IMR-90 (cell line): ENCODE measurements at regions of chr22 and their contacts with region 1.

Region 1: GRCh38 chr22:42969421-42969871 is 45.5 kb downstream of the PACSIN2 start:
- DNase-seq: peak; percentile 86
- ATAC-seq: peak; percentile 30; the same call in 1 of the 2 replicates
- H3K4me3 ChIP-seq: no peak overlapping the region
- H3K27ac ChIP-seq: no peak overlapping the region
- H3K4me1 ChIP-seq: peaks cover 9% of the 10 kb centered on the region
- H3K27me3 ChIP-seq: no peaks in the 10 kb centered on the region
- CTCF ChIP-seq: no peak
- POLR2A ChIP-seq: no peak
- RAD21 ChIP-seq: no peak

Region 2: GRCh38 chr22:42805016-42805997 is 164.1 kb before region 1 on chr22:
- CTCF ChIA-PET with region 1: no interaction called
- POLR2A ChIA-PET with region 1: interaction called, 11 read pairs
- dilution Hi-C with region 1: no loop called
- in situ Hi-C with region 1: no loop called
- intact Hi-C with region 1: no loop called
- DNase-seq: no peak
- ATAC-seq: peak; percentile 64
- H3K4me3 ChIP-seq: no peak overlapping the region
- H3K27ac ChIP-seq: peak overlapping the region; percentile 76
- H3K4me1 ChIP-seq: peaks cover 15% of the 10 kb centered on the region
- H3K27me3 ChIP-seq: no peaks in the 10 kb centered on the region
- CTCF ChIP-seq: no peak
- POLR2A ChIP-seq: no peak
- RAD21 ChIP-seq: no peak